ENCODE measurements at regions of chr16 and their contacts with region 1.

Region 1: GRCh38 chr16:66552286-66553177 is at the start of gene CKLF:
- DNase-seq: peak; percentile 81 to 97 (median 90)
- ATAC-seq: peak; percentile 68
- H3K4me3 ChIP-seq: peak within 1 kb of the TSS; percentile 85
- H3K4me3 Mint-ChIP-seq: peak within 1 kb of the TSS; percentile 92
- H3K27ac ChIP-seq: peak within 1 kb of the TSS; percentile 79 to 81
- H3K27ac Mint-ChIP-seq: peak within 1 kb of the TSS; percentile 93
- H3K4me1 ChIP-seq: peaks cover 81% of the 10 kb centered on the region
- H3K4me1 Mint-ChIP-seq: peaks cover 86% of the 10 kb centered on the region
- H3K27me3 ChIP-seq: no peaks in the 10 kb centered on the region
- H3K27me3 Mint-ChIP-seq: no peaks in the 10 kb centered on the region
- CTCF ChIP-seq: no peak
- total RNA-seq, gene CKLF: 10.6 to 14.1 TPM

Region 2: GRCh38 chr16:66516808-66517585 is 35.5 kb before region 1 on chr16:
- CTCF ChIA-PET with region 1: interaction called, 20 read pairs
- POLR2A ChIA-PET with region 1: interaction called, 124 read pairs
- intact Hi-C with region 1: loop called (anchors 2 to 5 kb)
- DNase-seq: peak; percentile 31 to 93 (median 76)
- ATAC-seq: peak; percentile 86
- H3K4me3 ChIP-seq: no peak overlapping the region
- H3K4me3 Mint-ChIP-seq: peak overlapping the region; percentile 70
- H3K27ac ChIP-seq: peak overlapping the region; percentile 86 to 93
- H3K27ac Mint-ChIP-seq: peak overlapping the region; percentile 94
- H3K4me1 ChIP-seq: peaks cover 81% of the 10 kb centered on the region
- H3K4me1 Mint-ChIP-seq: peaks cover 60% of the 10 kb centered on the region
- H3K27me3 ChIP-seq: no peaks in the 10 kb centered on the region
- H3K27me3 Mint-ChIP-seq: no peaks in the 10 kb centered on the region
- CTCF ChIP-seq: no peak

Region 3: DNA sequence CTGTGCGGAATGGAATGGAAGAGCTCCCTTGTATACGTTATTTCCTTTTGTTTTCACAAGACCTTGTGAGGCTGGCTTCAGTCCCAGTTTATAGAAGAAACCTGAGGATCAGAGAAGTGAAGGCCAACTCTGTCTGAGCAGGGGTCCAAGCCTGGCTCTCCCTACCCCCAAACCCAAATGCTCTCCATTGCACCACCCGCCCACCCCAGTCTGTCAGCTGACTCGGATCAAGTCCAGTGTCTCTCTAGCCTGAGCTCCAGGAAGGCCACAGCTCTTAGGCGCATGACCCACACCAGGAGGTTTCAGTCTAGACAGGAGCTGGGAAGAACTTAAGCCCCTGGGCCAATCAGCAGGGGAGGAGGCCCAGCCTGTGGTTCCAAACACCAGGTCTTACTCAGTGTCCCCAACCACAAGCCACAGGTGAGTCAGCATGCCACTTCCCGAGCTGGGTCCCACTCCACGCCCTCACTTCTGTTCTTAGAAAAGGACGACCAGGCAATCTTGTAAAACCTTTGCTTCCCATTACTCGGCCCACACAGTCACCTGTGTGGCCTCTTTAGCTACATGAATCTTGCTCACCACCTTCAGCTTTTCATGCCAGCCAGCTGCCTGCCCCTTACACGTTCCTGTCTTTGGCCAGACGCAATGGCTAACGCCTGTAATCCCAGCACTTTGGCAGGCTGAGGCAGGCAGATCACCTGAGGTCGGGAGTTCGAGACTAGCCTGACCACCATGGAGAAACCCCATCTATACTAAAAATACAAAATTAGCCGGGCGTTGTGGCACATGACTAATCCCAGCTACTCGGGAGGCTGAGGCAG is 30.4 kb before region 1 on chr16:
- CTCF ChIA-PET with region 1: interaction called, 20 read pairs
- POLR2A ChIA-PET with region 1: interaction called, 124 read pairs
- intact Hi-C with region 1: loop called (anchors 2 kb)
- DNase-seq: peak; percentile 41 to 93 (median 80)
- ATAC-seq: peak; percentile 76
- H3K4me3 ChIP-seq: peak overlapping the region; percentile 2
- H3K4me3 Mint-ChIP-seq: peak overlapping the region; percentile 74
- H3K27ac ChIP-seq: peak overlapping the region; percentile 14 to 49
- H3K27ac Mint-ChIP-seq: peak overlapping the region; percentile 93
- H3K4me1 ChIP-seq: peaks cover 84% of the 10 kb centered on the region
- H3K4me1 Mint-ChIP-seq: peaks cover 86% of the 10 kb centered on the region
- H3K27me3 ChIP-seq: no peaks in the 10 kb centered on the region
- H3K27me3 Mint-ChIP-seq: no peaks in the 10 kb centered on the region
- CTCF ChIP-seq: no peak

Region 4: GRCh38 chr16:66578651-66579531 is 26.4 kb after region 1 on chr16 and contains the start of gene CMTM2:
- CTCF ChIA-PET with region 1: no interaction called
- POLR2A ChIA-PET with region 1: interaction called, 17 read pairs
- intact Hi-C with region 1: no loop called
- DNase-seq: peak in 6 of 14 experiments; percentile 16 to 37 (median 28)
- ATAC-seq: peak; percentile 51
- H3K4me3 ChIP-seq: peak within 1 kb of the TSS; percentile 41
- H3K4me3 Mint-ChIP-seq: peak within 1 kb of the TSS; percentile 70
- H3K27ac ChIP-seq: no peak within 1 kb of the TSS
- H3K27ac Mint-ChIP-seq: no peak within 1 kb of the TSS
- H3K4me1 ChIP-seq: peaks cover 15% of the 10 kb centered on the region
- H3K4me1 Mint-ChIP-seq: peaks cover 16% of the 10 kb centered on the region
- H3K27me3 ChIP-seq: peaks cover 20 to 21% of the 10 kb centered on the region in 2 experiments
- H3K27me3 Mint-ChIP-seq: peaks cover 25% of the 10 kb centered on the region
- CTCF ChIP-seq: no peak
- total RNA-seq, gene CMTM2: not detected

Region 5: DNA sequence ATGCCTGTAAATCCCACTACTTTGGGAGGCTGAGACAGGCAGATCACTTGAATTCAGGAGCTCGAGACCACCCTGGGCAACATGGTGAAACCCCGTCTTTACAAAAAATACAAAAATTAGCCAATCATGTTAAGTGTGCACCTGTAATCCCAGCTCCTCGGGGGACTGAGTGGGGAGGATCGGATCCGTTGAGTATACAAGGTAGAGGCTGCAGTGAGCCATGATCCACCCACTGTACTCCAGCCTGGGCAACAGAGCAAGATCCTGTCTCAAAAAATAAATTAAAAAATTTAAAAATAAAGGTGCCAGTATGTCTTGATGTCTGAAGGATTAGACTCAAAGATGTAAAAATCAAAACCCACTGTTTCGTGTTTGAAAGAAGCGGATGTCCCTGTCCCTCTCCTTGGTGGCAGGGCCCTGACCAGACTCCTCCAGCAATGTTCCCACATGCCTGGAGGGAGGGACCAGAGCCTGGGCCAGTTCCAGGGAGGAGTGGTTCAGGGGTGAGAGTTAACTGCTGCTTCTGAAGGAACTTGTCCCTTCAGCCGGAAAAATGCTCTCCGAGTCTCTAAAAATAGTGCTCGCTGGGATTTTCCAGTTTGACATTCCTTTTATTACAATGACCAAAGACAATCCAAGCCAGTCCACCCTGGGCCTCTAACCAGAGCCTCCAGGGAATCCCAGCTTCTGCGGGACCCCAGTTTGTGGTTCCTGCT is 153.4 kb after region 1 on chr16:
- CTCF ChIA-PET with region 1: no interaction called
- POLR2A ChIA-PET with region 1: no interaction called
- intact Hi-C with region 1: no loop called
- DNase-seq: no peak
- ATAC-seq: no peak
- H3K4me3 ChIP-seq: no peak overlapping the region
- H3K4me3 Mint-ChIP-seq: no peak overlapping the region
- H3K27ac ChIP-seq: no peak overlapping the region
- H3K27ac Mint-ChIP-seq: no peak overlapping the region
- H3K4me1 ChIP-seq: no peaks in the 10 kb centered on the region
- H3K4me1 Mint-ChIP-seq: no peaks in the 10 kb centered on the region
- H3K27me3 ChIP-seq: no peaks in the 10 kb centered on the region
- H3K27me3 Mint-ChIP-seq: peaks cover 15% of the 10 kb centered on the region
- CTCF ChIP-seq: no peak